GM18951 (cell line): ENCODE measurements at regions of chr1 and their contacts with region 1.

Region 1: GRCh38 chr1:239898062-239898730 is 193.5 kb upstream of the FMN2 start:
- POLR2A ChIP-seq: no peak

Region 2: GRCh38 chr1:239418681-239419080 is 479.5 kb before region 1 on chr1:
- in situ Hi-C with region 1: loop called (anchors 25 kb)
- POLR2A ChIP-seq: no peak